Activated naive CD4-positive, alpha-beta T cell treated with anti-CD3 and anti-CD28 coated beads for 36 hours (primary cell): ENCODE measurements at regions of chr11 and their contacts with region 1.

Region 1: DNA sequence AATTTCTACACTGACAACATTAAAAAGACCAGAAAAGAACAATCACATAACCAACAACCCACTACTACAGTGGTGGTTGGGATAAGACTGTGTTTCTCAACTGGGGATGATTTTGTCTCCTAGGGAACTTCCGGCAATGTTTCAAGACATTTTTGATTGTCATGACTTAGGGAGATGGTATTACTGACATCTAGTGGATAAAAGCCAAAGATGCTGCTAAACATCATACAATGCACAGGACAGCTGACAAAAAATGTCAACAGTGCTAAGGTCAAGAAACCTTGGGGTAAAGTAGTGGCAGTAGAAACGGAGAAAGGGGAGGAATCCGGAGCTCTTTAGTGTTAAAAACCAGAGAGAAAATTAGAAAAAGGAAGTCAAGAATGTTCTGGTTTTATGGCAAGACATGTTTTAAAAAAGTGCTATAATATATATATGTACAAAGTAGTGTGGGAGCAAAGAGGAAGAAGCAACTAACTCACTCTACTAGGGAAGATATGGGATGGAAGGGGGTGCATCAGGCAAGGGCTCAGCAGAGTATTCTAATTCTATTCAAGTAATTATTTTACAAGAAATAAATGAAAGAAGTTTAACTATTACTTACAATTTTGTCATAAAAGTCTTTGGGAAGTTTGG is 37.2 kb downstream of the CKAP5 start:
- DNase-seq: no peak
- H3K4me3 Mint-ChIP-seq: no peak overlapping the region
- H3K27ac Mint-ChIP-seq: no peak overlapping the region
- H3K4me1 Mint-ChIP-seq: peaks cover 4% of the 10 kb centered on the region
- H3K27me3 Mint-ChIP-seq: no peaks in the 10 kb centered on the region

Region 2: DNA sequence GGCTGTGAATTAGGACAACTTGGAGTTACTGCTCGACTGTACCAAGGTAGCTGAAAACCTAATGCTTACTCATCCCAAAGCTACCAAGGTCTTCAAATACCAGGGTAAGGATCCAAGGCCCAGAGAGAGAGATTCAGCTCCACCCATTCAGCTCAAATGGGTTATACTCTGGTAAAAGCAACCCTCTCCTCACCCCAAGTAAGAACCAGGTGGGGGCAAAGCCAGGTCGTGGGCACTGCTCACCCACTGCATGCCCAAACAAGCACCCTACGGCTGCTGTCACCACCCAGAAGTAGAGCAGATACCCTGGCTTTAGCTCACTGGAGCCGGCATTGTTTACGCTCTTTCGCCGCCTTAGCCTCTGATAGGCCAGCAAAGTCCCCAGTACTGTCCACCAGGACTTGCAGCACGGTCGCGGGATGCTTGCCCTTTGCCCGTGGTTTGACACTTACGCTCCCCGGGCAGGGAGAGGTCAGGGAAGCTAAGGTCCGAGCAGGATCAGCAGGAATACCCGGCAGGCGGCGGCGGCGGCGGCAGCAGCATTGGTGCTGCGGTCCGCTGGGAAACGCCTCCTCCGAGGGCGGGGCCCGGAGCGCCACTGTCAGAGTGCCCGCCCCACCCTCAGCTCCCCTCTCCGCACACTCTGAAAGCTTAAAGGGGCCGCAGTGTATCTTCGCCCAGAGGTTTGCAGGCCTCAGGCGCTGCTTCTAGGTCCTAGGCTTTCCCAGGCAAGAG is 17.6 kb after region 1 on chr11:
- CTCF ChIA-PET with region 1: interaction called, 3 read pairs
- intact Hi-C with region 1: loop called (anchors 2 kb)
- DNase-seq: peak; percentile 66
- H3K4me3 Mint-ChIP-seq: peak overlapping the region; percentile 60
- H3K27ac Mint-ChIP-seq: no peak overlapping the region
- H3K4me1 Mint-ChIP-seq: peaks cover 24% of the 10 kb centered on the region
- H3K27me3 Mint-ChIP-seq: no peaks in the 10 kb centered on the region

Region 3: GRCh38 chr11:46835897-46836296 is 27.0 kb after region 1 on chr11:
- CTCF ChIA-PET with region 1: interaction called, 3 read pairs
- intact Hi-C with region 1: loop called (anchors 1 kb)
- DNase-seq: no peak
- H3K4me3 Mint-ChIP-seq: no peak overlapping the region
- H3K27ac Mint-ChIP-seq: no peak overlapping the region
- H3K4me1 Mint-ChIP-seq: peaks cover 19% of the 10 kb centered on the region
- H3K27me3 Mint-ChIP-seq: no peaks in the 10 kb centered on the region